Posterior cingulate gyrus (tissue), 11 donors: ENCODE measurements at regions of chr1 and their contacts with region 1.

Region 1: GRCh38 chr1:34162852-34163766 is 1.9 kb downstream of the CSMD2 start:
- DNase-seq: peak; percentile 74 to 98 (median 87)

Region 2: DNA sequence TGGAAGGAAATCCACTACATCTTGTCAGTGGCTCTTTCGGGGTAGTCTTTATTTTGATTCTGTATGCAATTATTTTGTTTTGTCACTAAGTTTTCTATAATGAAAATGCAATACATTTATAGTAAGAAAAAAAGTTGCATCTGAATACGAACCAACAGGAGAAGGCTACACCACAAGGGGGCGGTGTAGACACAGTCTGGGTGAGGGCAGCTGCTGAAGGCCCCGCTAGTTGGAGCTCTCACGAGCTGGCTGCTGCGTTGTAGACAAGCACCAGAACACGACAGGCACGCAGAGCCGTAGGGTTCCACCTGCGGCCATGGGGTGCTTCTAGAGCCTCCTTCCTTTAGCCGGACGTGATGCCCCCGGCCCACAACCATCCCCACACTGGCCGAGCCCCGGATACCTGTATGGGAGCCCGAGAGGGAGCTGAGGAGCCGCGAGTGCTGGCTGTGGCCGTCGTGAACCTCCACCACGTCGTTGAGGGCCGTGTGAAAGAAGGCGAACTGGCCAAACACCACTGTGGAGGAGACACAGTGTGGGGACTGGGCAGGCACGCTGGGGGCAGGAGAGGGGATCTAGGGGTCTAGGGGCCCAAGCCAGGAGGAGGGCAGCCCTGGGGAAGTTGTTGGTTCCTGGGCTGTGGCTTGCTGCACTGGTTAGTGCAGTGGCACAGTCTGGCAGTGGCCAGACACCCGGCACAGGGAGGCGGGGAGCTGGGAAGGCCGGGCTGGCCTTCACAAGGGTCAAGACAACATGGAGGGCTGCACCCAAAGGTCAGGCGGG is 529.9 kb before region 1 on chr1:
- intact Hi-C with region 1: loop called (anchors 1 kb)
- DNase-seq: peak; percentile 83 to 99 (median 96)

Region 3: GRCh38 chr1:33735621-33736020 is 427.5 kb before region 1 on chr1:
- intact Hi-C with region 1: loop called (anchors 5 kb)
- DNase-seq: no peak

Region 4: DNA sequence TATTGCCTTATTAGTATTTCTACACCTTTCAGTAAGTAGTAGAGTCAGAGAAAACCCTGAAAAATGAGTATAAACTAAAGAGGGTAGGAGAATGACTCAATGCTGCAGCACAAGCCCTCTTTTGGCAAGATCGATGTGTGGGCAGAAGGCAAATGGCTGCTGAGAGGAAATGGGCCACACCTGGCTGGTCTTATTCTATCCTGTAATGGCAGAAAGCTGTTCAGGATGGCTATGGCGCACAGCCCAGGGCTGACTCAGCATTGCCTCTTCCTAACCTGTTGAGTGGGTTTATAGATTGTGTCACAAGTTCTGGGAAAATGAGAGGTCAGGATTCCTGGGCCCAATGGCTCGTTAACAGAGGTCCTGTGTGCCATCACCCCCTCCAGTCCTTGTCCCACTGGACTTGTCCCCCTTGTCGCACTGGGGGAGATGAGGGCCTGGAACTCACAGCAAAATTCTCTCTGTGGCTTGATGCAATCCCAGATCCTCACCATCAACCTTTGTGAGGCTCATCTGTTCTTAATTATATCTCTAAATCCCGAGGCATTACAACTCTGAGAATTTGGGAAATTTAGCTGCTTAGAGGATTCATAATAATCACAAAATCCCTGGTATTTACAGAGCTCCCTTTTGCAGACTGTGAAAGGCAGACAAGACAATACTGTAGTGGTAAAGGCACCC is 286.0 kb before region 1 on chr1:
- intact Hi-C with region 1: loop called (anchors 10 kb)
- DNase-seq: peak in 8 of 10 donors; percentile 45 to 95 (median 74)

Region 5: DNA sequence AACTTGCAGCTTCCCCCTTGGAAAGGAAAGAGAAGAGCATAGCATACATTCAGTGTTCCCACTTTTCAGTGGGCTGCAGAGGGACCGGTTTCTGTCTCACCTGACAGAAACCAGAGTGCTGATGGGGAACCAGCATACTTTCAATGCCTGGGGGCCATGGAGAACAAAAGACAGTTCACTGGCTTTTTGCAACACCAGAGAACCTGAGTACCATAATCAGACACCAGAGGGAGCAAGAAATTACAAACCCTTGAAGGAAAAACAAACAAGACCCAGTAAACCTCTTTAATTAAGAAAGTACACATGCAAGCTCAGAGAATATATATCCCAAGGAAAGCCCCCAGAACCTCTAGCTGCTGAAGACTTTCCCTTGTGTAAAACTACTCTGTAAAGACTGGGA is 49.2 kb before region 1 on chr1:
- intact Hi-C with region 1: loop called (anchors 2 kb)
- DNase-seq: no peak

Region 6: GRCh38 chr1:34597877-34598514 is 434.9 kb after region 1 on chr1:
- intact Hi-C with region 1: loop called (anchors 2 kb)
- DNase-seq: peak; percentile 78 to 98 (median 90)